Naive thymus-derived CD4-positive, alpha-beta T cell (primary cell): ENCODE measurements at regions of chr1 and their contacts with region 1.

Region 1: GRCh38 chr1:24502709-24503058 is at the start of gene RCAN3:
- DNase-seq: peak; percentile 82 to 94 (median 92)
- ATAC-seq: peak; percentile 81
- H3K4me3 ChIP-seq: peak within 1 kb of the TSS; percentile 84
- H3K4me3 Mint-ChIP-seq: peak within 1 kb of the TSS; percentile 90 to 100 (median 99)
- H3K27ac ChIP-seq: peak within 1 kb of the TSS; percentile 99
- H3K27ac Mint-ChIP-seq: peak within 1 kb of the TSS; percentile 95 to 99 (median 98)
- H3K4me1 ChIP-seq: peaks cover 42 to 53% of the 10 kb centered on the region in 2 donors
- H3K4me1 Mint-ChIP-seq: peaks cover 38 to 65% (median 60%) of the 10 kb centered on the region in 7 donors
- H3K27me3 ChIP-seq: no peaks in the 10 kb centered on the region
- H3K27me3 Mint-ChIP-seq: peaks cover 0 to 9% (median 0%) of the 10 kb centered on the region in 5 donors
- total RNA-seq, gene RCAN3: 68.5 to 247 (median 183) TPM

Region 2: GRCh38 chr1:23959041-23959460 is 543.6 kb before region 1 on chr1:
- CTCF ChIA-PET with region 1: no interaction called
- POLR2A ChIA-PET with region 1: no interaction called
- intact Hi-C with region 1: loop called in 1 of 2 experiments (anchors 10 kb)
- DNase-seq: peak; percentile 60 to 96 (median 92)
- ATAC-seq: peak; percentile 89
- H3K4me3 ChIP-seq: peak overlapping the region; percentile 72
- H3K4me3 Mint-ChIP-seq: peak overlapping the region; percentile 93 to 100 (median 99)
- H3K27ac ChIP-seq: peak overlapping the region; percentile 95
- H3K27ac Mint-ChIP-seq: peak overlapping the region; percentile 98 to 100 (median 100)
- H3K4me1 ChIP-seq: peaks cover 23 to 25% of the 10 kb centered on the region in 2 donors
- H3K4me1 Mint-ChIP-seq: peaks cover 31 to 83% (median 57%) of the 10 kb centered on the region in 7 donors
- H3K27me3 ChIP-seq: no peaks in the 10 kb centered on the region
- H3K27me3 Mint-ChIP-seq: no peaks in the 10 kb centered on the region

Region 3: GRCh38 chr1:24463776-24464735 is 38.6 kb before region 1 on chr1:
- CTCF ChIA-PET with region 1: no interaction called
- POLR2A ChIA-PET with region 1: interaction called, 20 read pairs
- intact Hi-C with region 1: no loop called
- DNase-seq: peak in 6 of 9 donors; percentile 12 to 37 (median 31)
- ATAC-seq: no peak
- H3K4me3 ChIP-seq: no peak overlapping the region
- H3K4me3 Mint-ChIP-seq: peak overlapping the region in 8 of 10 donors; percentile 63 to 75 (median 68)
- H3K27ac ChIP-seq: peak overlapping the region; percentile 45
- H3K27ac Mint-ChIP-seq: peak overlapping the region; percentile 58 to 95 (median 86)
- H3K4me1 ChIP-seq: peaks cover 0 to 15% of the 10 kb centered on the region in 2 donors
- H3K4me1 Mint-ChIP-seq: peaks cover 21 to 65% (median 50%) of the 10 kb centered on the region in 7 donors
- H3K27me3 ChIP-seq: no peaks in the 10 kb centered on the region
- H3K27me3 Mint-ChIP-seq: no peaks in the 10 kb centered on the region

Region 4: DNA sequence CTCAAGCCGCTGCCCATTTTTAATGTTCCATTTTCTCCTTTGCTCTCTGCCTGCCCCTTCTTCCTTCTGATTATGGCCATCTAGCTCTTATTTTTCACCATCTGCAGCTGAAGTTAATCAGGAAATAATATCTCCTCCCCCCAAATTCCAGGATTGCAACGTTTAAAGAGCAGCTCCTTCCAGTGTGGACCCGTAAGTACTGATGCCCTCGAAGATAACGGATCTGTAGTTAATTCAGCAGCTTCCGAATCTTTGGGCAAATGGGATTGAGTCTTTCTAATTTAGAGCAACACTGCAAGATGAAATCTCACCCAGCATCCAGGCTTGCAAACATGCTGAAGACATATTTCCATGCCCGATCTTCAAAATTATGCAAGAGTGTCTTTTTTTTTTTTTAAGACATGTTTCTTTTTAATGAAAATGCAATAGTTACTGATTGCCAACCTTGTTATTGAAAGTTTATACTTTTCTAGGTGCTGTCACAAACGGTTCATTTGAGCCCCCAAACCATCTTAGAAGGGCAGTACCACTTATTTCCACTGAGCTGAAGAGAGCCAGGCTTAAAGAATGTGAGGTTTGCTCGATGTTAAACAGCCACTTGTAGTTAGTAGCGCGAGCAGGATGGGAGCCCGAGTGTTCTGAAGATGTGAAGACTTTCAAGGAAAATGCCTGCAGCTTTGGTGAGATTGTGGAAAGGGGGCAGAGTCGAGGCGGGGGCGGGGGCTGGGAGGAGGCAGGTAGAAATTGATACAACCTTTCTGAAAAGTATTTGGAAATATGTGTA is 10.9 kb before region 1 on chr1:
- CTCF ChIA-PET with region 1: interaction called, 38 read pairs
- POLR2A ChIA-PET with region 1: interaction called, 929 read pairs
- intact Hi-C with region 1: loop called (anchors 1 kb)
- DNase-seq: peak in 1 of 9 donors; percentile 21
- ATAC-seq: no peak
- H3K4me3 ChIP-seq: no peak overlapping the region
- H3K4me3 Mint-ChIP-seq: peak overlapping the region in 2 of 10 donors; percentile 6 to 18
- H3K27ac ChIP-seq: no peak overlapping the region
- H3K27ac Mint-ChIP-seq: peak overlapping the region in 8 of 9 donors; percentile 4 to 84 (median 48)
- H3K4me1 ChIP-seq: peaks cover 5 to 31% of the 10 kb centered on the region in 2 donors
- H3K4me1 Mint-ChIP-seq: peaks cover 23 to 53% (median 35%) of the 10 kb centered on the region in 7 donors
- H3K27me3 ChIP-seq: no peaks in the 10 kb centered on the region
- H3K27me3 Mint-ChIP-seq: peaks cover 0 to 3% (median 0%) of the 10 kb centered on the region in 5 donors

Region 5: DNA sequence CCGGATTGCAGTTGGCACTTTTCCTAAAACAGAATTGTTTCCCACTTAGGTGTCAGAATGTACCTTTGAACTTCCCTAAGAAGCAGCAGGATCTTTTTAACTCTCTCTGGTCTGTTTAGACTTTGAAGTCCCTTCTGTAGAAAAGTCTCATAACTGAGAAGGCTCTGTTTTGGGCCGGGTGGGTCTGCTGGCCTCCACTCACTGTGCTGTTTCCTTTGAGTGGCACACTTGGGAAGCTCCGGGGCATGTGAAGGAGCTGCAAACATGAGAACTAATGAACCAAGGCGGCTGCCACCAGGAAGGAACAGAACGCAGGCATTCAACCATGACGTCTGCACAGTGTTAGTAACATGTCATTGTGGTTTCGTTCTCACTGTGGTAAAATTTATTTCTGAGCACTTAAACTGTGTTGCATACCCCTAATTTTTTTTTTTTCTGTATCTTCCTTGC is 33.7 kb after region 1 on chr1:
- CTCF ChIA-PET with region 1: interaction called, 5 read pairs
- POLR2A ChIA-PET with region 1: interaction called, 58 read pairs
- intact Hi-C with region 1: loop called (anchors 1 kb)
- DNase-seq: peak; percentile 41 to 92 (median 87)
- ATAC-seq: peak; percentile 90
- H3K4me3 ChIP-seq: no peak overlapping the region
- H3K4me3 Mint-ChIP-seq: peak overlapping the region; percentile 79 to 91 (median 84)
- H3K27ac ChIP-seq: peak overlapping the region; percentile 96
- H3K27ac Mint-ChIP-seq: peak overlapping the region; percentile 93 to 100 (median 99)
- H3K4me1 ChIP-seq: peaks cover 30 to 38% of the 10 kb centered on the region in 2 donors
- H3K4me1 Mint-ChIP-seq: peaks cover 29 to 90% (median 70%) of the 10 kb centered on the region in 7 donors
- H3K27me3 ChIP-seq: no peaks in the 10 kb centered on the region
- H3K27me3 Mint-ChIP-seq: no peaks in the 10 kb centered on the region

Region 6: GRCh38 chr1:24759492-24759891 is 256.8 kb after region 1 on chr1:
- CTCF ChIA-PET with region 1: no interaction called
- POLR2A ChIA-PET with region 1: no interaction called
- intact Hi-C with region 1: no loop called
- DNase-seq: no peak
- ATAC-seq: no peak
- H3K4me3 ChIP-seq: no peak overlapping the region
- H3K4me3 Mint-ChIP-seq: no peak overlapping the region
- H3K27ac ChIP-seq: no peak overlapping the region
- H3K27ac Mint-ChIP-seq: no peak overlapping the region
- H3K4me1 ChIP-seq: no peaks in the 10 kb centered on the region
- H3K4me1 Mint-ChIP-seq: no peaks in the 10 kb centered on the region
- H3K27me3 ChIP-seq: no peaks in the 10 kb centered on the region
- H3K27me3 Mint-ChIP-seq: no peaks in the 10 kb centered on the region

Region 7: DNA sequence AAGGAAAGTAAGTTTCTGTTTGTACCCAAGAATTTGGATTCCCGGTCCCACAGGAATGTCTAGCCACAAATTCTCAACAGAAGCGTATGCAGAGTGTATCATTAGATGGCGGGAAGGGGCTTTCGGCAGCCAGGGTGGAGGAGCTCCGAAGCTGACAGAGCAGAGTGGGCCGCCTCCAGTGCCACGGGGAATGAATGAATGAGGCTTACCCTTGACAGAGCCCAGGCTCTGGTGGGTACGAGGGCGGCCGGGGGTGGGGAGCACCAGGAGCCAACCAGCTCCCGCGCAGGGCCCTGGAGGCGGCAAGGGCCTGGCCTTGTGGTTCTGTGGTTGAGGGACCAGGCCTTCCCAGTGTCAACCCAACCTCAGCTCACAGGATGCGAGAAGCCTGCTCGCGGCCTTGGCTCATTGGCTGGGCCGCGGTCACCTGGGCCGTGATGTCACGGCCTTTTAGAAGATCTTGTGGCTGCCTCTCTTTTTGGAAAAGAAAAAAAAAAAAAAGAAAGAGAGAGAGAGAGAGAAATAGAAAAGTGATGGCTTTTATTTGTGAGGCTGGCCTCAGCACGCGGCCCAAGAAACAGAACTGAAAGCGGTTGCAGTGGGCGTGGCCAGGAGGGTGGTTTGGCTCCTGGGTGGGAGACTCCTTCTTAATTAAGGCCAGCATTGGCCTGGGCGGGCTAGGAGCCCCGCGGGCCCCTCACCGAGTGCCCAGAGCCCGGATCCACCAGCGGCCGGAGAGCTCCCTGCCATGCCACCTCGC is 462.3 kb after region 1 on chr1:
- CTCF ChIA-PET with region 1: no interaction called
- POLR2A ChIA-PET with region 1: no interaction called
- intact Hi-C with region 1: loop called in 1 of 2 experiments (anchors 5 kb)
- DNase-seq: peak; percentile 62 to 94 (median 88)
- ATAC-seq: peak; percentile 96
- H3K4me3 ChIP-seq: peak overlapping the region; percentile 65
- H3K4me3 Mint-ChIP-seq: peak overlapping the region; percentile 74 to 92 (median 83)
- H3K27ac ChIP-seq: peak overlapping the region; percentile 74
- H3K27ac Mint-ChIP-seq: peak overlapping the region; percentile 89 to 97 (median 95)
- H3K4me1 ChIP-seq: peaks cover 30 to 39% of the 10 kb centered on the region in 2 donors
- H3K4me1 Mint-ChIP-seq: peaks cover 36 to 85% (median 69%) of the 10 kb centered on the region in 7 donors
- H3K27me3 ChIP-seq: no peaks in the 10 kb centered on the region
- H3K27me3 Mint-ChIP-seq: peaks cover 0 to 3% (median 0%) of the 10 kb centered on the region in 5 donors

Region 8: GRCh38 chr1:25430666-25431505 is 928.2 kb after region 1 on chr1 and contains the start of gene MACO1:
- CTCF ChIA-PET with region 1: no interaction called
- POLR2A ChIA-PET with region 1: no interaction called
- intact Hi-C with region 1: loop called in 1 of 2 experiments (anchors 5 kb)
- DNase-seq: peak; percentile 93 to 99 (median 98)
- ATAC-seq: peak; percentile 91
- H3K4me3 ChIP-seq: peak within 1 kb of the TSS; percentile 100
- H3K4me3 Mint-ChIP-seq: peak within 1 kb of the TSS; percentile 93 to 99 (median 98)
- H3K27ac ChIP-seq: peak within 1 kb of the TSS; percentile 96
- H3K27ac Mint-ChIP-seq: peak within 1 kb of the TSS; percentile 96 to 100 (median 100)
- H3K4me1 ChIP-seq: peaks cover 30 to 33% of the 10 kb centered on the region in 2 donors
- H3K4me1 Mint-ChIP-seq: peaks cover 32 to 55% (median 48%) of the 10 kb centered on the region in 7 donors
- H3K27me3 ChIP-seq: no peaks in the 10 kb centered on the region
- H3K27me3 Mint-ChIP-seq: peaks cover 0 to 3% (median 0%) of the 10 kb centered on the region in 5 donors
- total RNA-seq, gene MACO1: 16.7 to 25.9 (median 22.0) TPM